HepG2 (cell line): ENCODE measurements at regions of chr1 and their contacts with region 1.

Region 1: DNA sequence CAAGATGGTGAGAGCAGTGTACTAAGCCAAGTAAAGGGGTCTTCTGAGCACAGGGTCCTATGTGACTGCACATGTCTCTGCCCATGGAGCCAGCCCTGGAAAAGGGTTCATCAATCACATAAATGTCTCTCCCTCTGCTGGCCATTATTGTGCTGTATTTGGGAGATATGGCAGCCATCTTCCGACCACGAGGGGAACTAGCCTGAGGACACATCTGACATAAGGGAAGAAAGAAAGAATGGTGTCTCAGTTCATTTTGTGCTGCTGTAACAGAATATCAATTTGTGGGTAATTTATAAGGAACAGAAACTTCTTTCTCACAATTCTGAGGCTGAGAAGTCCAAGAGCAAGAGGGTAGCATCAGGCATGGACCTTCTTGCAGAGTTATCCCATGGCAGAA is 55.1 kb upstream of the GJA5 start:
- DNase-seq: no peak
- ATAC-seq: peak; percentile 59; the same call in 2 of the 3 replicates
- H3K4me3 ChIP-seq: no peak overlapping the region
- H3K27ac ChIP-seq: no peak overlapping the region
- H3K4me1 ChIP-seq: no peaks in the 10 kb centered on the region
- H3K27me3 ChIP-seq: no peaks in the 10 kb centered on the region; a peak in 1 of 5 replicates
- CTCF ChIP-seq: peak; percentile 25
- EP300 ChIP-seq: no peak
- POLR2A ChIP-seq: no peak
- RAD21 ChIP-seq: no peak

Region 2: GRCh38 chr1:147735423-147735822 is 80.1 kb before region 1 on chr1:
- CTCF ChIA-PET with region 1: no interaction called
- POLR2A ChIA-PET with region 1: no interaction called
- in situ Hi-C with region 1: no loop called
- intact Hi-C with region 1: loop called (anchors 10 kb)
- DNase-seq: no peak
- ATAC-seq: no peak
- H3K4me3 ChIP-seq: no peak overlapping the region
- H3K27ac ChIP-seq: no peak overlapping the region
- H3K4me1 ChIP-seq: peaks cover 12% of the 10 kb centered on the region
- H3K27me3 ChIP-seq: no peaks in the 10 kb centered on the region
- CTCF ChIP-seq: no peak
- EP300 ChIP-seq: no peak
- POLR2A ChIP-seq: no peak
- RAD21 ChIP-seq: no peak